CD14-positive monocyte (primary cell): ENCODE measurements at regions of chr3 and their contacts with region 1.

Region 1: GRCh38 chr3:138834359-138835212 is at the start of gene PIK3CB:
- DNase-seq: peak; percentile 70 to 84 (median 83)
- H3K4me3 ChIP-seq: peak within 1 kb of the TSS; percentile 79 to 93 (median 81)
- H3K4me3 Mint-ChIP-seq: peak within 1 kb of the TSS; percentile 84 to 98
- H3K27ac ChIP-seq: peak within 1 kb of the TSS; percentile 89 to 92
- H3K27ac Mint-ChIP-seq: peak within 1 kb of the TSS; percentile 90 to 98 (median 96)
- H3K4me1 ChIP-seq: peaks cover 25 to 26% of the 10 kb centered on the region in 2 donors
- H3K4me1 Mint-ChIP-seq: peaks cover 28% of the 10 kb centered on the region
- H3K27me3 ChIP-seq: no peaks in the 10 kb centered on the region
- H3K27me3 Mint-ChIP-seq: peaks cover 0 to 1% (median 0%) of the 10 kb centered on the region in 3 donors
- CTCF ChIP-seq: peak; percentile 29
- polyA plus RNA-seq, gene PIK3CB: 14.1 to 33.6 (median 20.4) TPM

Region 2: GRCh38 chr3:138774529-138775253 is 59.9 kb before region 1 on chr3:
- intact Hi-C with region 1: loop called in 1 of 2 experiments (anchors 5 kb)
- DNase-seq: peak; percentile 61 to 82 (median 72)
- H3K4me3 ChIP-seq: no peak overlapping the region
- H3K4me3 Mint-ChIP-seq: no peak overlapping the region
- H3K27ac ChIP-seq: peak overlapping the region in 1 of 2 donors; percentile 80
- H3K27ac Mint-ChIP-seq: peak overlapping the region in 6 of 7 donors; percentile 26 to 83 (median 64)
- H3K4me1 ChIP-seq: peaks cover 7 to 19% of the 10 kb centered on the region in 2 donors
- H3K4me1 Mint-ChIP-seq: peaks cover 18% of the 10 kb centered on the region
- H3K27me3 ChIP-seq: no peaks in the 10 kb centered on the region
- H3K27me3 Mint-ChIP-seq: peaks cover 0 to 2% (median 0%) of the 10 kb centered on the region in 3 donors
- CTCF ChIP-seq: no peak

Region 3: GRCh38 chr3:138875754-138876664 is 41.4 kb after region 1 on chr3:
- intact Hi-C with region 1: loop called in 1 of 2 experiments (anchors 5 kb)
- DNase-seq: peak; percentile 61 to 82 (median 79)
- H3K4me3 ChIP-seq: peak overlapping the region; percentile 24 to 64 (median 52)
- H3K4me3 Mint-ChIP-seq: peak overlapping the region; percentile 55 to 88
- H3K27ac ChIP-seq: peak overlapping the region; percentile 33 to 80
- H3K27ac Mint-ChIP-seq: peak overlapping the region; percentile 84 to 91 (median 88)
- H3K4me1 ChIP-seq: peaks cover 24 to 30% of the 10 kb centered on the region in 2 donors
- H3K4me1 Mint-ChIP-seq: peaks cover 23% of the 10 kb centered on the region
- H3K27me3 ChIP-seq: no peaks in the 10 kb centered on the region
- H3K27me3 Mint-ChIP-seq: peaks cover 0 to 3% (median 2%) of the 10 kb centered on the region in 3 donors
- CTCF ChIP-seq: no peak